A549 (cell line): ENCODE measurements at regions of chr10 and their contacts with region 1.

Region 1: GRCh38 chr10:18238870-18239485 is 98.8 kb downstream of the CACNB2 start:
- DNase-seq: peak; percentile 20 to 51
- ATAC-seq: peak; percentile 43; a peak in 1 of 6 replicates
- H3K4me3 ChIP-seq: no peak overlapping the region
- H3K27ac ChIP-seq: no peak overlapping the region
- H3K4me1 ChIP-seq: no peaks in the 10 kb centered on the region
- CTCF ChIP-seq: peak; percentile 79
- EP300 ChIP-seq: no peak
- POLR2A ChIP-seq: no peak
- RAD21 ChIP-seq: peak; percentile 75 to 77

Region 2: GRCh38 chr10:18254086-18254485 is 15.1 kb after region 1 on chr10:
- CTCF ChIA-PET with region 1: interaction called, 10 read pairs
- POLR2A ChIA-PET with region 1: no interaction called
- DNase-seq: no peak
- ATAC-seq: no peak
- H3K4me3 ChIP-seq: no peak overlapping the region
- H3K27ac ChIP-seq: no peak overlapping the region
- H3K4me1 ChIP-seq: no peaks in the 10 kb centered on the region
- CTCF ChIP-seq: no peak
- EP300 ChIP-seq: no peak
- POLR2A ChIP-seq: no peak
- RAD21 ChIP-seq: no peak